Calu3 (cell line): ENCODE measurements at regions of chr10 and their contacts with region 1.

Region 1: GRCh38 chr10:126504063-126504739 is 115.9 kb upstream of the ADAM12 start:
- DNase-seq: peak; percentile 32
- H3K4me3 Mint-ChIP-seq: no peak overlapping the region
- H3K27ac Mint-ChIP-seq: no peak overlapping the region
- H3K4me1 Mint-ChIP-seq: no peaks in the 10 kb centered on the region
- H3K27me3 Mint-ChIP-seq: no peaks in the 10 kb centered on the region
- CTCF ChIP-seq: peak; percentile 51

Region 2: GRCh38 chr10:125868372-125868975 is 635.7 kb before region 1 on chr10:
- CTCF ChIA-PET with region 1: no interaction called
- intact Hi-C with region 1: loop called (anchors 10 kb)
- DNase-seq: peak; percentile 18
- H3K4me3 Mint-ChIP-seq: no peak overlapping the region
- H3K27ac Mint-ChIP-seq: no peak overlapping the region
- H3K4me1 Mint-ChIP-seq: no peaks in the 10 kb centered on the region
- H3K27me3 Mint-ChIP-seq: no peaks in the 10 kb centered on the region
- CTCF ChIP-seq: peak; percentile 46

Region 3: GRCh38 chr10:125936331-125936730 is 567.9 kb before region 1 on chr10:
- CTCF ChIA-PET with region 1: interaction called, 12 read pairs
- intact Hi-C with region 1: loop called (anchors 2 kb)
- DNase-seq: no peak
- H3K4me3 Mint-ChIP-seq: no peak overlapping the region
- H3K27ac Mint-ChIP-seq: no peak overlapping the region
- H3K4me1 Mint-ChIP-seq: no peaks in the 10 kb centered on the region
- H3K27me3 Mint-ChIP-seq: no peaks in the 10 kb centered on the region
- CTCF ChIP-seq: no peak

Region 4: GRCh38 chr10:125982260-125982948 is 521.8 kb before region 1 on chr10:
- CTCF ChIA-PET with region 1: no interaction called
- intact Hi-C with region 1: loop called (anchors 1 kb)
- DNase-seq: peak; percentile 14
- H3K4me3 Mint-ChIP-seq: no peak overlapping the region
- H3K27ac Mint-ChIP-seq: no peak overlapping the region
- H3K4me1 Mint-ChIP-seq: peaks cover 12% of the 10 kb centered on the region
- H3K27me3 Mint-ChIP-seq: no peaks in the 10 kb centered on the region
- CTCF ChIP-seq: no peak